ENCODE measurements at regions of chr2 and their contacts with region 1.

Region 1: DNA sequence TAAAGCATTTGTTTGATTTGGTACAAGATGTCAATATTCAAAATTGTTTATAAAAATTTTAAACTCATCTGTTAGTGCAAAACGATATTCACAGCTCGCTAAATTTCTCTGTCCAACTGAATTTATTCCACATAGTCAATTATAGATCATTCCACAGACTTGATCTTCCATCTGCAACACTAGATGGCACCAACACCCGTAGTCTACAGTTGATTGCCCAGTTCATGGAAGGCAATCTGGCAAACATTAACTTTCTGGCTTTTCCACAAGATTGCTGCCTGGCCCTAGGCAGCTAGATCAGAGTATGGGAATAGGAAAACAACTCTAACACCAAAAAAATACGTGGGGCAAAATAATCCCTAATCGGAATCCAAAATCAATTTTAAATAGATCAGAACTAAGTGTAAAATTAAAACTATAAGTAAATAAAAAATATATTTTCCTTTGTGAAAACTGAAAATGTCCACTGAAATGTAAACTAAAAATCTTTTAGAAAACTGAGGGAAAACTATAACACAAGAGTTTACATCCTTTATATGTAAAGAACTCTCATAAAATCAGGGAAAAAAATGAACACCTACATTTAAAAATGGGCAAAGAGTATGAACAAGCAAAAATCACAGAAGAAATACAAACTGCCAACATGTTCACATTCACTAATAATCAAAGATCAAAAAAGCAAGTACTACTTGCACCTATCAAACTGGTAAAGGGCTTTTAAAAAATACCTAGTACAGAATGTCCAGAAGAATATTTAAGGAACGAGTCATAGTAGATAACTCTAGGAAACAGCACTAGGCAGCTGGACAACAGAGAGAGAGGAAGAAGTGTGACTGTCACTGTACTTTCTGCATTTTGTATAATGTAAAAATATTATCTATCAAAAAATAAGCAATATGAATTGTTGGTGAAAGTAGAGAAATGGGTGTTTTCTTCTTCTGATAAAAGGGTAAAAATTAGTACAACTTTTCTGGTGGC is 35.0 kb downstream of the RTN4 start:
- DNase-seq: no peak
- ATAC-seq: peak; percentile 49
- H3K4me3 ChIP-seq: no peak overlapping the region
- H3K27ac ChIP-seq: no peak overlapping the region
- H3K4me1 ChIP-seq: peaks cover 15% of the 10 kb centered on the region; the same call in 1 of the 2 replicates
- H3K27me3 ChIP-seq: no peaks in the 10 kb centered on the region
- CTCF ChIP-seq: peak; percentile 51 to 64 (median 55); a peak in 5 of 6 replicates
- EP300 ChIP-seq: no peak
- POLR2A ChIP-seq: no peak
- RAD21 ChIP-seq: peak; percentile 93

Region 2: GRCh38 chr2:54763636-54764291 is 251.5 kb before region 1 on chr2:
- CTCF ChIA-PET with region 1: interaction called, 11 read pairs
- POLR2A ChIA-PET with region 1: no interaction called
- RAD21 ChIA-PET with region 1: interaction called, 3 read pairs
- SMC1A ChIA-PET with region 1: no interaction called
- in situ Hi-C with region 1: no loop called
- intact Hi-C with region 1: loop called (anchors 5 kb)
- DNase-seq: no peak
- ATAC-seq: peak; percentile 83
- H3K4me3 ChIP-seq: no peak overlapping the region
- H3K27ac ChIP-seq: no peak overlapping the region
- H3K4me1 ChIP-seq: peaks cover 1% of the 10 kb centered on the region
- H3K27me3 ChIP-seq: no peaks in the 10 kb centered on the region; a peak in 2 of 4 replicates
- CTCF ChIP-seq: peak; percentile 50 to 71 (median 61)
- EP300 ChIP-seq: no peak
- POLR2A ChIP-seq: no peak
- RAD21 ChIP-seq: peak; percentile 49

Region 3: GRCh38 chr2:54899576-54900200 is 115.6 kb before region 1 on chr2:
- CTCF ChIA-PET with region 1: interaction called, 125 read pairs
- POLR2A ChIA-PET with region 1: no interaction called
- RAD21 ChIA-PET with region 1: interaction called, 65 read pairs
- SMC1A ChIA-PET with region 1: interaction called, 81 read pairs
- in situ Hi-C with region 1: no loop called
- intact Hi-C with region 1: loop called (anchors 2 kb)
- DNase-seq: peak; percentile 4
- ATAC-seq: peak; percentile 68
- H3K4me3 ChIP-seq: no peak overlapping the region
- H3K27ac ChIP-seq: no peak overlapping the region
- H3K4me1 ChIP-seq: no peaks in the 10 kb centered on the region
- H3K27me3 ChIP-seq: no peaks in the 10 kb centered on the region
- CTCF ChIP-seq: peak; percentile 39 to 64 (median 55); a peak in 5 of 6 replicates
- EP300 ChIP-seq: no peak
- POLR2A ChIP-seq: no peak
- RAD21 ChIP-seq: peak; percentile 92

Region 4: DNA sequence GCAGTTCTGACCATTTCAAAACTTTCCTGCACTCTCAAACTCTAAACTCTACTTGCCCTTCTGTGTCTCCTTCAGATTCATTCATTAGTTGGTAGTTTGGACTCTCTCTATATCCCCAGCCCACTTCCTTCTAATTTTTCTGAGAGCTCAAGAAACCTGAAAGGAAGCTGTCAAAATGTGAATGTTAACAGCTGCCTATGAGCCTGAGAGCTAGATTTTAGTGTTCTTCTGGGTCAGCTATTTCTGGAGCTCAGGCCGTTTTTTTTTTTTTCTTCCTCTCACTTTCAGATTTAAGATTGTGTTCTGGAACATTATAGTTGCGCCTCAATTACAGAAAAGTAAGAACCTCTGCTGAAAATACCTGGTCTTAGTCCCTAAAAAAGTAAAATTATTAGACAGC is 38.1 kb before region 1 on chr2:
- CTCF ChIA-PET with region 1: interaction called, 10 read pairs
- POLR2A ChIA-PET with region 1: interaction called, 3 read pairs
- RAD21 ChIA-PET with region 1: interaction called, 24 read pairs
- SMC1A ChIA-PET with region 1: interaction called, 12 read pairs
- in situ Hi-C with region 1: no loop called
- intact Hi-C with region 1: no loop called
- DNase-seq: peak; percentile 77
- ATAC-seq: peak; percentile 93
- H3K4me3 ChIP-seq: peak overlapping the region; percentile 53; the same call in 1 of the 2 replicates
- H3K27ac ChIP-seq: peak overlapping the region; percentile 74
- H3K4me1 ChIP-seq: peaks cover 26% of the 10 kb centered on the region
- H3K27me3 ChIP-seq: no peaks in the 10 kb centered on the region
- CTCF ChIP-seq: no peak
- EP300 ChIP-seq: peak in 1 of 2 experiments; percentile 23; a peak in 1 of 4 replicates
- POLR2A ChIP-seq: no peak
- RAD21 ChIP-seq: no peak; the same call in 1 of the 2 replicates

Region 5: GRCh38 chr2:55026202-55026601 is 11.0 kb after region 1 on chr2:
- CTCF ChIA-PET with region 1: interaction called, 14 read pairs
- POLR2A ChIA-PET with region 1: interaction called, 3 read pairs
- RAD21 ChIA-PET with region 1: interaction called, 10 read pairs
- SMC1A ChIA-PET with region 1: interaction called, 22 read pairs
- in situ Hi-C with region 1: no loop called
- intact Hi-C with region 1: no loop called
- DNase-seq: no peak
- ATAC-seq: no peak; the same call in 2 of the 3 replicates
- H3K4me3 ChIP-seq: peak overlapping the region; percentile 40; the same call in 1 of the 2 replicates
- H3K27ac ChIP-seq: peak overlapping the region; percentile 69
- H3K4me1 ChIP-seq: peaks cover 26% of the 10 kb centered on the region
- H3K27me3 ChIP-seq: no peaks in the 10 kb centered on the region
- CTCF ChIP-seq: no peak
- EP300 ChIP-seq: no peak
- POLR2A ChIP-seq: no peak
- RAD21 ChIP-seq: no peak

Region 6: DNA sequence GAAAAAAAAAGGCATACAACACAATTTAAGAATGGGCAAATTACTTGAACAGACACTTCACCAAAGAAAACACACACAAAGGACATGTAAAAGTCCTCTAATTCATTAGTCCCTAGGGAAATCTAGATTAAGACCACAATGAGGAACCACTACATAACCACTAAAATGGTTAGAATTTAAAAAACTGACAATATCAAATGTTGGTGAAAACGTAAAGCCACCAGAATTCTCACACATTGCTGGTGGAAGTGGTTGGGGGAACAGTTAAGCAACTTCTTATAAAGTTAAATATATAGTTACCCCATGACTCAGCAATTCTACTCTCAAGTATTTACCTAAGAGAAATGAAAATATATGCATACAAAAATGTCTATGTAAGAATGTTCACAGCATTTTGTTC is 23.2 kb after region 1 on chr2:
- CTCF ChIA-PET with region 1: interaction called, 13 read pairs
- POLR2A ChIA-PET with region 1: no interaction called
- RAD21 ChIA-PET with region 1: interaction called, 14 read pairs
- SMC1A ChIA-PET with region 1: interaction called, 20 read pairs
- in situ Hi-C with region 1: no loop called
- intact Hi-C with region 1: no loop called
- DNase-seq: no peak
- ATAC-seq: no peak
- H3K4me3 ChIP-seq: no peak overlapping the region
- H3K27ac ChIP-seq: no peak overlapping the region
- H3K4me1 ChIP-seq: peaks cover 10% of the 10 kb centered on the region
- H3K27me3 ChIP-seq: no peaks in the 10 kb centered on the region
- CTCF ChIP-seq: no peak
- EP300 ChIP-seq: no peak
- POLR2A ChIP-seq: no peak
- RAD21 ChIP-seq: no peak

Measured in GM12878 (cell line).